ENCODE measurements at regions of chr5 and their contacts with region 1.

Region 1: DNA sequence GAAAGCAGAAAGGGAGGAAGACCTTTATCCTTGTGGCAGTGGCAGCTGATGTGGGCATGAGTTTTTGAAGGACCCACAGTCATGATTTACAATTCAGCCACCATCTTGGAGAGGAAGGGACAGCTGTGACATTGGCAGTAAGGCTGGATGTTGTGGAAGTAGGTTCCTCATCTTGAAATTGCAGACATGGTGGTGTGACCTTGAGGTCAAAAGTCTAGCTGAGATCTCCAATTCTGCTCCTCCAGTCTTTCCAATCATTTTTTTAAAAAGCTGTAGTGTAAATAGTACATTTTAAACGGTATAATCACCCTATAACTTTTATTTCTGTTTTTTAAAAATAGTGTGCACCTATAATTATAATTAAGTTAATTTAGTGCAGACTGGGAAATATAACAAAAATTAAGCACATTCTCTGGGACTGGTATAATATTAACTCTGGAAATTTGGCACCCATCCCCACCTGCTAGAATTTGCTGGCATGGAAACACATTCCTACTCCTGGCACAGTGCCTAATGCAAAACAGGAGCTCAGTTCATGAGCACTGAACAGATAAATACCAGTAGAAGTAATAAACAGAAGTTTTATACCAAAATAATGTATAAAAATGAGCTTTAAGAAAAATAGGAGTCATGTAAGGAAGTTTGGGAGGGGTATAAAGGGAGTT is 23.8 kb upstream of the NPR3 start:
- DNase-seq: no peak
- ATAC-seq: no peak
- H3K4me3 ChIP-seq: no peak overlapping the region
- H3K27ac ChIP-seq: peak overlapping the region; percentile 63 to 77
- H3K4me1 ChIP-seq: peaks cover 0 to 3% of the 10 kb centered on the region in 2 donors
- H3K27me3 ChIP-seq: no peaks in the 10 kb centered on the region

Region 2: DNA sequence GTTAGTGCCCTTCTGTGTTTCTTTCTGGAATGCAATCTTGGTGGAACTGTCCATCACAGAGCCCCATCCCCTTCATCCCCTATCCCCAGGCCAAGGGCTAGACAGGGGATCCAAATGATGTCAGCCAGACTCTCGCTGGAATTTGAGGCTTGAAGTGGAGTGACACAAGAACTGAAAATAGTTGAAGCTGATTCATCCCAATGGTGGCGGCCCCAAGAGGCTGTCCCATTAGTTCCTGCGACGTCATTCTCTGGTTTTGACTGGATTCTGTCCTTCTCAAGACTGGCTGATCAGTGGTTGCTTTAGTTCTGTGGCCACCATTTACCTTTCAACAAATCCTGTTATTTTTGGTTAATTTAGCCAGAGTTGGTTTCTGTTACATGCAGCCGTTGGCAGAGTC is 42.1 kb before region 1 on chr5:
- intact Hi-C with region 1: loop called (anchors 5 kb)
- DNase-seq: no peak
- ATAC-seq: peak; percentile 47
- H3K4me3 ChIP-seq: no peak overlapping the region
- H3K27ac ChIP-seq: peak overlapping the region; percentile 0 to 48
- H3K4me1 ChIP-seq: peaks cover 0 to 3% of the 10 kb centered on the region in 2 donors
- H3K27me3 ChIP-seq: no peaks in the 10 kb centered on the region

Region 3: DNA sequence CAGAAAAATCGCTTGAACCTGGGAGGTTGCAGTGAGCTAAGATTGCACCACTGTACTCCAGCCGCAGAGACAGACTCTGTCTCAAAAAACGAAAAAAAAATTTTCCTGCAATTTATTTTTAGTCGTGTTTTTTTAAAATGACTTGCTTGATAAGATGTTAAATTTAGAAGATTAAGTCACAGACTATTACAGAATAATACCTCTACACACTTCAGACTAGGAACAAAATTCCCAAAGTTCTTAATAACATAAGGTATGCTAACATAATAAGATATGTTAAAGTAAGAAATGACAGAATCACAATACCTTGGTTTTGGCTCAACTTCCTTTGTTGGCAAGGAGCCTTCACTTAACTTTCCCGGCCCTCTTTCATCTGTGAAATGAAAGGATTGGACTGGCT is 35.7 kb before region 1 on chr5:
- intact Hi-C with region 1: loop called (anchors 5 kb)
- DNase-seq: no peak
- ATAC-seq: peak; percentile 48
- H3K4me3 ChIP-seq: no peak overlapping the region
- H3K27ac ChIP-seq: no peak overlapping the region
- H3K4me1 ChIP-seq: peaks cover 0 to 3% of the 10 kb centered on the region in 2 donors
- H3K27me3 ChIP-seq: no peaks in the 10 kb centered on the region